Activated naive CD4-positive, alpha-beta T cell treated with anti-CD3 and anti-CD28 coated beads for 36 hours (primary cell): ENCODE measurements at regions of chr17 and their contacts with region 1.

Region 1: GRCh38 chr17:76384222-76384986 is at the start of gene SPHK1:
- DNase-seq: peak; percentile 68
- H3K4me3 Mint-ChIP-seq: peak within 1 kb of the TSS; percentile 83
- H3K27ac Mint-ChIP-seq: peak within 1 kb of the TSS; percentile 79
- H3K4me1 Mint-ChIP-seq: peaks cover 6% of the 10 kb centered on the region
- H3K27me3 Mint-ChIP-seq: no peaks in the 10 kb centered on the region
- total RNA-seq, gene SPHK1: 9.0 to 9.2 TPM

Region 2: DNA sequence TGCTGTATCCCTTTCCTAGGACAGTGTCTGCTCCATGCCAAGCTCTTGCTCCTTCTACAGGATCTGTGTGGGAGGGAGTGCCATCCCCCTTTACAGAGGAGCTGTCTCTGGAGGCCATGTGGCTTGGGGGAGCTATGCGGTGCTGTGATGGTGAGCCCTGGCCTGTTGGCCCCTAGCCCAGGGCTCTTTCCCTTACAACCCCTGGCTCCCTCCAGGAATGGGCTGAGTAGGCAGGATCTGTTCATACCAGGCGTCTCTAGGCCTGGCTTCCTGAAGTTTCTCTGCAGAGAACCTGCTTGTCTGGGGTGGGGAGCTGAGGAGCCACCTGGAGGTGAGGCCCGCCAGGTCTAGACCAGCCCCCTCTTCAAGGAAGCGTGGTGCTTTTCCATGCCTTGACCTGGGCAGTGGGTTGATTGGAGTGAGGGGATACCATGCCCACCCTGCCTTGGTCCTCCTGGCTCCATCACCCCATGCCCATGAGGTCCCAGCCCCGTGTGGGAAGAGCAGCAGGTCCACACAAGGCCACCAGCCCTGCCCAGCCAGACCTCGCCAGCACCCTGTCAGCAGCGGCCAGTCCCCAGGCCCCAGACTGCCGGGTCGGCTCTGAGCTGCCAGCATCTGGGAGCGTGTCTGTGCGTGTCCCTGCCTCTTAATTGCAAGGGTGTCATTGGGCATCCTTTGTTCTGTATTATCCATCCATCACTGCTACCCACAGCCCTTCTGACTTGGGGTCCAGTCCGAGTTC is 844.3 kb before region 1 on chr17:
- CTCF ChIA-PET with region 1: no interaction called
- intact Hi-C with region 1: no loop called
- DNase-seq: no peak
- H3K4me3 Mint-ChIP-seq: no peak overlapping the region
- H3K27ac Mint-ChIP-seq: no peak overlapping the region
- H3K4me1 Mint-ChIP-seq: peaks cover 7% of the 10 kb centered on the region
- H3K27me3 Mint-ChIP-seq: no peaks in the 10 kb centered on the region

Region 3: GRCh38 chr17:76103274-76104139 is 280.9 kb before region 1 on chr17 and contains the start of gene EXOC7:
- CTCF ChIA-PET with region 1: no interaction called
- intact Hi-C with region 1: loop called (anchors 10 kb)
- DNase-seq: peak; percentile 95
- H3K4me3 Mint-ChIP-seq: peak within 1 kb of the TSS; percentile 94
- H3K27ac Mint-ChIP-seq: peak within 1 kb of the TSS; percentile 92
- H3K4me1 Mint-ChIP-seq: peaks cover 19% of the 10 kb centered on the region
- H3K27me3 Mint-ChIP-seq: no peaks in the 10 kb centered on the region
- total RNA-seq, gene EXOC7: 43.5 to 46.6 TPM

Region 4: DNA sequence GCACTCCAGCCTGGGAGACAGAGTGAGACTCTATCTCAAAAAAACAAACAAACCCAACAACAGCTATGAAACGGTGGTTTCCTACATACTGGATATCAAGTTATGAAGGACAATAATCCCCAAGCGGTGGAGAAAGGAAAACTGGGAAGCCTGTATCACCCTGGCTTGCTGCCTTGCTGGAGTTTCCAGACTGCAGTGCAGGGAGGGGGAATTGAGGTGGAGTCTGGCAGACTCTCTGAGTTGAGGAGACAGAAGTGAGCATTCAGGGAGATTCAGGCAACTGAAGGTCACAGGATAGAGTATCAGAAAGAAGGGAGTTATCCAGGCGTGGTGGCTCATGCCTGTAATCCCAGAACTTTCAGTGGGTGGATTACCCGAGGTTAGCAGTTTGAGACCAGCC is 88.2 kb before region 1 on chr17:
- CTCF ChIA-PET with region 1: interaction called, 32 read pairs
- intact Hi-C with region 1: no loop called
- DNase-seq: no peak
- H3K4me3 Mint-ChIP-seq: no peak overlapping the region
- H3K27ac Mint-ChIP-seq: no peak overlapping the region
- H3K4me1 Mint-ChIP-seq: peaks cover 2% of the 10 kb centered on the region
- H3K27me3 Mint-ChIP-seq: no peaks in the 10 kb centered on the region

Region 5: GRCh38 chr17:76307299-76307965 is 77.0 kb before region 1 on chr17:
- CTCF ChIA-PET with region 1: interaction called, 32 read pairs
- intact Hi-C with region 1: loop called (anchors 1 kb)
- DNase-seq: no peak
- H3K4me3 Mint-ChIP-seq: no peak overlapping the region
- H3K27ac Mint-ChIP-seq: no peak overlapping the region
- H3K4me1 Mint-ChIP-seq: no peaks in the 10 kb centered on the region
- H3K27me3 Mint-ChIP-seq: no peaks in the 10 kb centered on the region

Region 6: DNA sequence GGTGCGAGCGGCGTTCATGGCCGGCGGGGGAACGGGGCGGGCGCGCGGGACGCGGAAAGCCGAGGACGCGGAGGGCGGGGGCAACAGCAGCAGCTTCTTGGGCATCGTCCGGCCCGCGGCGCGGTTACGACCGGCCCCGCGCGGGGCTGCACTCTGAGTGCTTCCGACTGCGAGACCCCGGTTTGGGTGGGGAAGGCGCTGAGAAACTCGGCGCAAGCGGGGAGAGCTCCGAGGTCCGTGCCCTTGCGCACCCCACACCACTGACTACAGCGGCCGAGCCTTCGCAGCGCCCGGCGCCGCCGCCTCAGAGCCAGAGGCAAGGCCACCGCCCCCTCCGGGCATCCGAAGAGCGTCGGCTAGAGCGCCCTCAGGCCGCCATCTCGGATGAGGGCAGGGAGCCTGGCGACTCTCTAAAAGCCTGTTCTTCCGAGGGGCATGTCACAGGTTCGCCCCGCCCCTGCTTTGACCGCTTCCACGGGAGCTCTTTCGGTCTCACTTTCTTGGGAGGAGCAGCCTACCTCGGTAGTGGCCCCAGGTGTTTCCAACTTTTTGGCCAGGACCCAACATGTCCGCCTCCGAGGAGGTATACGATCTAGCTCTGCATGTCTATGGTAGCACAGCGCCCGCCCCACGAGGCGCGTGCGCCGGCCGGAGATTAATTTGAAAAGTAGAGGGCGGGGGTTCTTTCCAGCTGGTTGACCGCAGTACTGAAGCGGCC is 30.6 kb before region 1 on chr17 and contains the start of gene PRPSAP1:
- CTCF ChIA-PET with region 1: interaction called, 30 read pairs
- intact Hi-C with region 1: loop called (anchors 1 kb)
- DNase-seq: peak; percentile 87
- H3K4me3 Mint-ChIP-seq: peak within 1 kb of the TSS; percentile 94
- H3K27ac Mint-ChIP-seq: peak within 1 kb of the TSS; percentile 98
- H3K4me1 Mint-ChIP-seq: peaks cover 19% of the 10 kb centered on the region
- H3K27me3 Mint-ChIP-seq: no peaks in the 10 kb centered on the region
- total RNA-seq, gene PRPSAP1: 30.1 to 33.3 TPM

Region 7: DNA sequence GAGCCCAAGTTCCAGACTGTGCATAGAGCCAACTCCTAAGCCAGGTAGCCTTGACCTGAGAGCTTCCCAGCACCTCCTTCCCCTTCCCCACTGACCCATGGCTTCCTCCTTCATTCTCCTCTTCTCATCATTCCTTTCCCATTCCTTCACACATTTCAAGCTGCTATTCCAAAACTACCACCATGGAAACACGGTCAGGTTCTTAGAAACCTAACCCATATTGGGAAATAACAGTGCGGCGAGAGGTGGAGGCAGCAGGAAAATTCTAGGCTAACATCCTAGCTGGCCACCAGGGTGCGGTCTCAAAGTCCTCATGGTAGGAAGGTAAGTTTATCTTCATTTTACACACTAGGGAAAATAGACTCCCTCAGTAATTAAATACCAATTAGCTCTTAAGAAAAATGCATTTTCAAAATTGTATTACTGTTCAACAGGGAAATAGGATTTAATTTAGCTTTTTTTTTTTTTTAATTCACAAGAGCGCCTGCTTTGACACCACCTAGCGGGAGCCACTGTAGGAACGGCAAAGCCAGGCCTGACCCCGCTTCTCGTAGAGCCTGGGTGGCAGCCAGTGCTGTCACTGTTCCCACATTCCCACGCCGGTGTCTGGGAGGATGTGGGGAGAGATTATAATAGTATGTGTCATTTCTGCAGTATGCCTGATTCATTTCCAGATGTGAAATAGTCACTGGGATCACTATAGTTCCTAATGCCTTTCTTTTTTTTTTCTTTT is 14.0 kb before region 1 on chr17:
- CTCF ChIA-PET with region 1: interaction called, 11 read pairs
- intact Hi-C with region 1: no loop called
- DNase-seq: no peak
- H3K4me3 Mint-ChIP-seq: no peak overlapping the region
- H3K27ac Mint-ChIP-seq: no peak overlapping the region
- H3K4me1 Mint-ChIP-seq: peaks cover 3% of the 10 kb centered on the region
- H3K27me3 Mint-ChIP-seq: no peaks in the 10 kb centered on the region

Region 8: GRCh38 chr17:76452660-76453430 is 68.4 kb after region 1 on chr17 and contains the start of gene UBE2O:
- CTCF ChIA-PET with region 1: interaction called, 3 read pairs
- intact Hi-C with region 1: loop called (anchors 2 kb)
- DNase-seq: peak; percentile 92
- H3K4me3 Mint-ChIP-seq: peak within 1 kb of the TSS; percentile 85
- H3K27ac Mint-ChIP-seq: no peak within 1 kb of the TSS
- H3K4me1 Mint-ChIP-seq: peaks cover 41% of the 10 kb centered on the region
- H3K27me3 Mint-ChIP-seq: no peaks in the 10 kb centered on the region
- total RNA-seq, gene UBE2O: 18.8 TPM